Common myeloid progenitor, CD34-positive (primary cell): ENCODE measurements at regions of chr14 and their contacts with region 1.

Region 1: DNA sequence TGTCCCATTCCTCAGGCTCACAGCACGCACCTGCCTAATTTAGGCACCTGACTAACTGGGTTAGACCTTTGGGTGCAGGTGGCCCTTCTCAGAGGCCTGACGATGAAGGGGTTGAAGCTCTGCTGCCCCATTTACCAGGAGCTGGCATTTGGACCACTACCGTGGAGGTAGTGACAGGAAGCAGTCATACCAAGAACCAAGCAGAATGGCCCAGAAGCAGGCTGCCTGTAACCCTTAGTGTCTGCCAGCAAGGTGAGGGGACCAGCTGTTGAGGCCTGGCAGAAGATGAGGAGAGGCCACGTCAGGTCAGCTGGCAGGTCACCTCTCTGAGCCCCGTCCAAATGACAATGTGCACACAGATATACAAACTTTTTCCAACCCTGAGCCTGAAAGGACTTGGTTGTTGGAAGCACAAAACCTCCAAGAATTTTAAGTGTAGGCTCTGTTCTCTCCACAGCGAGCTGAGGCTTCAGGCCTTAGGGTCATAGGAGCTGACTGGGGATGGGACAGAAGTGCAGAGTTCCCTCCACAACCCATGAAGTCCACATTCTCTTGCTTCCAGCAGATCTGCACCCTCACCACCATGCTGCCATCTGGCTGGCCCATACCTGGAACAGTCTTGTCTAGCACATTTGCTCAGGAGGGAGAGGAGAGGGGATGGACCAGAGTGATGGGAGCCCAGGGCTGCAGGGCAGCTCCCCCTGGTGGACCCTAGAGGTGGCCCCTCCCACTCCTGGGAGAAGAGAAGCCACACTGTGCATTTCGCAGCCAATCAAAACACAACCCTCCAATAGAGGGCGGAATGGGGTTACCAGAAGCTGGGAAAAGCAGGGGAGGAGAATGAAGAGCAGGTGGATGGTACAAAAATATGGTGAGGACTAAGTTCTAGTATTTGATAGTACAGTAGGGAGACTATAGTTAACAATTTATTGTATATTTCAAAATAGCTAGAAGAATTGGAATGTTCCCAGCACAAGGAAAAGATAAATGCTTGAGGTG is 23.3 kb downstream of the VASH1 start:
- DNase-seq: peak; percentile 80 to 88 (median 84)
- H3K4me3 ChIP-seq: no peak overlapping the region
- H3K27ac ChIP-seq: no peak overlapping the region
- H3K4me1 ChIP-seq: peaks cover 0 to 33% (median 25%) of the 10 kb centered on the region in 4 experiments
- H3K27me3 ChIP-seq: no peaks in the 10 kb centered on the region

Region 2: DNA sequence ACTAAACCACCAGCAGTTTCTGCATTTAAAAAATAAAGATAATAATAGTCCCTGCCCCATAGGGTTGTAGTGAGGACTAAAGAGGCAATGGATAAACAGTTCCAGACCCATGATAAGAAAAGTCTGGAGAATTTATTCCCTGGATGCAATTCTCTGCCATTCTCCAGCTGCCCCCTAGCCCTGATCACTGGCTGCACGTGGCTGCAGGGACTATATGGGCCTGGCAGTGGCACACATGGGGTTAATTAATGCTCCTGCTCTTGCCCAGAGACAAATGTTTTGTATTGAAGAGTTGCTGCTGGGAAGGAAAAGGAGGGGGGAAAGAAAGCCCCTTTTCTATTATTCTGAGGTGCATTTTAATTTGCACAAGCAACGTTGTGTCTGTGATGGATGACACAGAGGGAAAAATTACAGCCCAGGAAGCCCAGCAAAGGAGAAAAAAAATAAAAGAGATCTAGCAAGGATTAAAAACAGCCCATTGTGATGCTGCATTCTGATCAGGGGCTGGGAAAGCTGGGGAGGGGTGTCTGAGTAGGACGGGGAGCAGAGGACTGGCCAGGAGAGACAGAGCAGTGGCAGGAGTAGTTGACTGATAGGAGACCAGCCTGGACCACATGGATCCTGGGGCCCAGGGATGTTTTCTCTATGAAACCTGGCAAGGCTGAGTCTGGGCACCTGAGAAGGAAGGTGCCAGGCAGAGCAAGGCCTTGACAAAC is 259.3 kb before region 1 on chr14:
- CTCF ChIA-PET with region 1: no interaction called
- POLR2A ChIA-PET with region 1: no interaction called
- DNase-seq: no peak
- H3K4me3 ChIP-seq: no peak overlapping the region
- H3K27ac ChIP-seq: no peak overlapping the region
- H3K4me1 ChIP-seq: no peaks in the 10 kb centered on the region
- H3K27me3 ChIP-seq: peaks cover 0 to 2% (median 0%) of the 10 kb centered on the region in 5 experiments

Region 3: GRCh38 chr14:76742966-76743365 is 41.6 kb before region 1 on chr14:
- CTCF ChIA-PET with region 1: interaction called, 10 read pairs
- POLR2A ChIA-PET with region 1: no interaction called
- DNase-seq: peak; percentile 36 to 85 (median 77)
- H3K4me3 ChIP-seq: no peak overlapping the region
- H3K27ac ChIP-seq: no peak overlapping the region
- H3K4me1 ChIP-seq: peaks cover 0 to 13% (median 3%) of the 10 kb centered on the region in 4 experiments
- H3K27me3 ChIP-seq: no peaks in the 10 kb centered on the region

Region 4: DNA sequence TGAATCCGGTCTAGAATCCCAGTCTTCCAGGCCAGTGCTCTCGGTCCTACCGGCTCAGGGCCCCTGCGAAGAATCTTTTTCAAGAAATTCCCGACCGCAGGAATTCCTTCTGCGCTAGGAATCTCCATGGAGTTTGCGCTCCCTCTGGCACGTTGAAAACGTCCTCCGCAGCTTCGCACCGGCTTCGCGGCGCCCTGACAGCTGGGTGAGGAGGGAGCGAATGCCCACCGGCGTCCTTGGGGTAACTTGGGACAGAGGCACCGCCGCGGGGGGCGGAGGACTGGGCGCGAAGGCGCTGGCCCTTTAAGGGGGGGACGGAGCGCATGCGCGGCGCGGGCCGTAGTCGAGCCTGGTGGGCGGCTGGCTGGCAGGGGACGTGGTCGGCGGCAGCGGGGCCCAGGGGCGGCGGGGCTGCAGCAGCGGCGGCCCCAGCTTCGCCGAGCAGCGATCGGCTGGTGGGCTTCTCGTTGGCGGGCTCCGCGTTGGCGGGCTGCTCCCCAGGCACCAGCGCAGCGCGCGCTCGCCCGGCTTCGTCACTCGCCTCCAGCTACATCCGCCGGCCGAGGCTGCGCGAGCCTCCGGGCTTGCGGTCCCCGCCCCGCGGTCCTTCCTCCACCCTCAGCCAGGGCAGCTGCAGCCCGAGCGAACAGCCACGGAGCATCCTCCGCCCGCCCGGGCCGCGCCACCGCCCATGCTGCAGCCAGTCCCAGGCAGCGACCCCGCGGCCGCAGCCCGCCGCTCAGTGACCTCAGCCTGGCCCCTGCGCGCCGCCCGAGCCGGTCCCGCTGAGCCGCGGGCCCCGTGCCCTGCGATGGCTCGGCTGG is 23.2 kb before region 1 on chr14 and contains the start of gene VASH1:
- CTCF ChIA-PET with region 1: interaction called, 200 read pairs
- POLR2A ChIA-PET with region 1: interaction called, 5 read pairs
- DNase-seq: peak; percentile 50 to 81 (median 73)
- H3K4me3 ChIP-seq: peak within 1 kb of the TSS; percentile 45 to 82 (median 61)
- H3K27ac ChIP-seq: no peak within 1 kb of the TSS
- H3K4me1 ChIP-seq: peaks cover 0 to 25% (median 19%) of the 10 kb centered on the region in 4 experiments
- H3K27me3 ChIP-seq: peaks cover 0 to 24% (median 8%) of the 10 kb centered on the region in 5 experiments

Region 5: DNA sequence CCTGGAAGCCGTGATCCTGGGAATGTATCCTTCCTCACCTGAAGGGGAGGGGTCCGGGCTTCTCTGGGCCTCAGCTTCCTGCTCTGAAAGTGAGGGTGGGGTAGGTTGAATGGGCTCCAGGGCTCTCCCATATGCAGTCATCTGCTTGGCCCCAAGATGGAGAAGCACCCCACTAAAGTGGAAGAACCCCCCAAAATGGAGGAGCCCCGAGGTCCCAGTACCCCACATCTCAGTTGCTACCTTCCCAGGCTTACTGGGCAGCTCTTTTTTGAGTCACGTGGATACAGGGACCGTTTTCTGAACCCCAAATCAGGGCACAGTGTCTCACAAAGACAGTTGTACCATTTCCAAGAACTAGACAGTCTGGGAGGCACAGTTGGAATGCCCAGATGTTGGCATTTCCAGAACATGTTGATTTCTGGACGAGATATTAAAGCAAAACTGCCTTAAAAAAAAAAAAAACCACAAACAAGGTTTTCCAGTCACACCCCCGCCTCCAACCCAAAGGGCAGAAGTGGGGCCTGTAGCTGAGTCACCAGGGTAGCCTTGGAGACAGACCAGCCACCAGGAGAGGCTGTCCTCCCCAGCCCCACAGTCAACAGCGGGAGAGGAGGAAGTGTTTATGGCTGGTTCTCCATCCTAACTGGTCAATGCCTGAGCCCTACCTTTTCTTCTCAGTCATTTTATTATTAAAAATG is 11.2 kb before region 1 on chr14:
- CTCF ChIA-PET with region 1: interaction called, 200 read pairs
- POLR2A ChIA-PET with region 1: interaction called, 17 read pairs
- DNase-seq: peak; percentile 76 to 91 (median 88)
- H3K4me3 ChIP-seq: peak overlapping the region in 4 of 7 experiments; percentile 5 to 43 (median 21)
- H3K27ac ChIP-seq: peak overlapping the region in 1 of 2 experiments; percentile 28
- H3K4me1 ChIP-seq: peaks cover 4 to 81% (median 63%) of the 10 kb centered on the region in 4 experiments
- H3K27me3 ChIP-seq: no peaks in the 10 kb centered on the region

Region 6: DNA sequence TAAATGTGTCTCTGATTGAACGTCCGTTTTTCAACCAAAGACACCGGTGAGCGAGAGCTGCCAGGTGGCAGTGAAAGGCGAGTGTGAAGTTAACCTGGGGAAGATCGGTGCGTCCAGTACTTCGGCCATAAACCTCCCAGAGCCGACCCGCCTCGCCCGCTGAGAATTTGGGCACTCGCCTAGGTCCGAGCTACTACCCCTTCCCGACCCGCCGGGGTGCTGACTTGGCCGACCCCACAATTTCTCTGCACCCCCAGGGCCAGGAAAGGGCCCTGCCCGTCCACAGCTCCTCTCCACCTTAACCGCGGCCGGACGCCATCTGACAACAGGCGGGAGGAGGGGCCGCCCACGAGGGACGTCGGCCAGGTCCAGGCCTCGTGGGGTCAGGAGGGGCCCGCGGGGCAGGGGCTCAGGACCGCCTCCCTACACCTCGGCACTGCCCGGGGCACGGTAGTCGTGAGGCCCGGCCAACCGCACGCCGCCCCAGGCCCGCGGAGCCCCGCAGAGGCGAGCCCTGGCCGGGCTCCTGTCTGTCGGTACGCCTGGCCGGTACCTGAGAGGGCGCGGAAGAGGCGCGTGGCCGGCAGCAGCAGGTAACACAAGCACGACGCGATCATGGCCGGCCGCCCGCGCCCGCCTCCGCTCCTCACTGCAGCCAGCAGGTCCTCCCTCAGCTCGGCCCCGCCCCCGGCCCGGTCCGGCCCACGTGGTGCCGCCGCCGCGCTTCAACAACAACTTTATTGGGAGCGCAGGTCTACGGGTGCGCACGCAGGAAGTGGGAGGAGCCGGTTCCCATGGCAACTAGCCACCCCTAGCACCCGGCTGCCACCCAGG is 27.9 kb after region 1 on chr14 and contains the start of gene ANGEL1:
- CTCF ChIA-PET with region 1: interaction called, 17 read pairs
- POLR2A ChIA-PET with region 1: interaction called, 3 read pairs
- DNase-seq: peak; percentile 94 to 96 (median 96)
- H3K4me3 ChIP-seq: peak within 1 kb of the TSS; percentile 71 to 85 (median 74)
- H3K27ac ChIP-seq: peak within 1 kb of the TSS; percentile 3 to 37
- H3K4me1 ChIP-seq: peaks cover 9 to 26% (median 24%) of the 10 kb centered on the region in 4 experiments
- H3K27me3 ChIP-seq: peaks cover 0 to 2% (median 0%) of the 10 kb centered on the region in 5 experiments

Region 7: DNA sequence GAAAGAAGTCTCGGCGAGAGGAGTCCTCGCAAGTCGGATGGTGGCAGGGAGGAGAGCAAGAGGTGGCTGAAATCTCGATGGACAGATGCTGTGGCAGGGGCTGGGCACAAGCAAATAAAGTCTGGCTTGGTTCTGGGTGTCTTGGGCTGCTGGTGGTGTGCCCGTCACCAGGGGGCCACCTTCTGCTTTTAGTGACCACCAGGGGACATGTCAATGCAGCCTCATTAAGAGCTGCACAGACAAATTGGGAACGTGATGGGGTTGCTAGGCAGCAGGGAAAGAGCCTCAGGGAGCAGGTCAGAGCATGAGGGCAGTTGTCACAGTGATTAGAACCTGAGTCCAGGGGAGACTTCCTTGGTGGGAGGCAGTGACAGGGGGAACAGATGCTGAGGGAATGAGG is 85.6 kb after region 1 on chr14:
- CTCF ChIA-PET with region 1: no interaction called
- POLR2A ChIA-PET with region 1: no interaction called
- DNase-seq: peak; percentile 48 to 67 (median 59)
- H3K4me3 ChIP-seq: no peak overlapping the region
- H3K27ac ChIP-seq: no peak overlapping the region
- H3K4me1 ChIP-seq: peaks cover 0 to 29% (median 15%) of the 10 kb centered on the region in 4 experiments
- H3K27me3 ChIP-seq: no peaks in the 10 kb centered on the region